ENCODE measurements at regions of chr4 and their contacts with region 1.

Region 1: DNA sequence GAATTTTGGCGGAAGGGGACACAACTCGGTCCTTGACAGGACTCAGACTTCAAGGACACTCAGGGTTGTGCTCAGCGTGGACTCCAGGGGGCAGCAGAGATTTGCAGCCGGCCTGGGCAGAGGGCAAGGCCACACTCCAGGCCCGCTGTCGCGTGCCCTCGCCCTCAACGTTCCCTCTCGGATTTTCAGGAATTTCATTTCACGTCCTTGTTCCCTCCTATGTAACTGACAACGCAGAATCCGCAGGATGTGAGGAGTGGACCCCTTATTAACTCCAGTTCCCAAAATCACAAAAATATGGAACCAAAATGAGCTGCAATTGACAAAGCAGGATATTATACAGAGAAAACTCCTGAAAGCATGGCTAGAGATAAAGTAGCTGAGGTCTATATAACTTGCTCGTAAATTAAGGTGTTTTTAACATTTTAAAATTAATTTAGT is 21.0 kb upstream of the DCTD start:
- DNase-seq: peak; percentile 65
- ATAC-seq: peak; percentile 92
- H3K4me3 ChIP-seq: no peak overlapping the region
- H3K4me3 Mint-ChIP-seq: no peak overlapping the region
- H3K27ac ChIP-seq: no peak overlapping the region
- H3K27ac Mint-ChIP-seq: no peak overlapping the region
- H3K4me1 ChIP-seq: no peaks in the 10 kb centered on the region
- H3K4me1 Mint-ChIP-seq: peaks cover 3% of the 10 kb centered on the region
- H3K27me3 ChIP-seq: peaks cover 0 to 4% (median 0%) of the 10 kb centered on the region in 4 experiments
- H3K27me3 Mint-ChIP-seq: peaks cover 20% of the 10 kb centered on the region
- CTCF ChIP-seq: peak; percentile 93

Region 2: GRCh38 chr4:182806259-182807252 is 131.7 kb before region 1 on chr4:
- CTCF ChIA-PET with region 1: no interaction called
- POLR2A ChIA-PET with region 1: no interaction called
- intact Hi-C with region 1: no loop called
- DNase-seq: peak; percentile 50
- ATAC-seq: peak; percentile 47
- H3K4me3 ChIP-seq: peak overlapping the region in 4 of 5 experiments; percentile 25 to 41 (median 32)
- H3K4me3 Mint-ChIP-seq: peak overlapping the region; percentile 85
- H3K27ac ChIP-seq: no peak overlapping the region
- H3K27ac Mint-ChIP-seq: no peak overlapping the region
- H3K4me1 ChIP-seq: peaks cover 21 to 26% of the 10 kb centered on the region in 2 donors
- H3K4me1 Mint-ChIP-seq: peaks cover 13% of the 10 kb centered on the region
- H3K27me3 ChIP-seq: peaks cover 0 to 22% (median 2%) of the 10 kb centered on the region in 4 experiments
- H3K27me3 Mint-ChIP-seq: peaks cover 19% of the 10 kb centered on the region
- CTCF ChIP-seq: peak; percentile 63

Region 3: DNA sequence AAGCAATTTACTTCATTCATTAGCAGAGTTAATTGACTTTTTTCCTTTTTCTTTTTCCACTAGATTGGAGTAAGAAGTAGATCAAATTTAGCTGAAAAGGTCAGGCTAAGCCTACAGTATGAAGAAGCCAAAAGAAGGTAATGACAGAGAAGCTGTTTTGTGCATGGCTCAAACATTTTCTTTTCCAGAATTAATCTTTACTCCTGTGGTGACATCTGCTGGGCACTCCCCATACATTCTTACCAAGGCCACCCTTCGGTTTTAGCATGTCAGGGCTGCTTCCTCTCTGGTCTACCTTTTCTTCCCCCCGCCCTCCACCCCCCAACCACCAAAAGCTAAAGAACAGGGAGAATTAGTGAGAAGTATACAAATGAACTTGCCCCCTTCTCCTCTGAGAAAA is 311.6 kb after region 1 on chr4:
- CTCF ChIA-PET with region 1: interaction called, 11 read pairs
- POLR2A ChIA-PET with region 1: no interaction called
- intact Hi-C with region 1: no loop called
- DNase-seq: no peak
- ATAC-seq: no peak
- H3K4me3 ChIP-seq: no peak overlapping the region
- H3K4me3 Mint-ChIP-seq: no peak overlapping the region
- H3K27ac ChIP-seq: no peak overlapping the region
- H3K27ac Mint-ChIP-seq: no peak overlapping the region
- H3K4me1 ChIP-seq: no peaks in the 10 kb centered on the region
- H3K4me1 Mint-ChIP-seq: no peaks in the 10 kb centered on the region
- H3K27me3 ChIP-seq: no peaks in the 10 kb centered on the region
- H3K27me3 Mint-ChIP-seq: no peaks in the 10 kb centered on the region
- CTCF ChIP-seq: no peak

Region 4: DNA sequence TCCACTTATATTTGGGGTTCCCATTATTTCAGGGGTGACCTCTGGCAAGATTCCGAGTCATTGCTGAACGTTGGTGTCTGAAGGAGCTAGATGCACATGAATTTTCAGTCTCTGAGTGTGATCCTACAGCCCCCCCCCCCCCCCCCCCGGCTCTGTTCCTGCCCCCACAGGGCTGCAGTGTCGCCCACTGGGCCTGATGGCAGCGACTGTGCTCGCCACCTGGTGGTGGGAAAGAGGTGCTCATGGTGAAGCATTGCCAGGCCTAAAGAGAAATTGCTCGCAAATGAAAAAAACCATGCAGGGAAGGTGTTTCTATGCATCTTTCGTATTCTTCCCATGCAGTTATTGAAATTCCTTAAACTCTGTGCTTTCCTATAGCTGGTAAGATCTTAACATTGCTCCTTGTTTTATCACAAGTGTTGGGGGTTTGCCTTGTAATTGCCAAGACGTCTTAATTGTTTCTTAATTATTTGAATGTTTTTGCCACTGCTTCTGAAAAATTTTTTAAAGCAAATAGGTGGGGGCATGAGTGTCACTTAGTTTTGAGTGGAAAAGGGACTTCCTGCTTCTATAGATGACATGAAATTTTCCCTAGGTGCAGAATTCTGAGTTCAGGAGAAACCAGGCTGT is 318.6 kb after region 1 on chr4:
- CTCF ChIA-PET with region 1: interaction called, 35 read pairs
- POLR2A ChIA-PET with region 1: no interaction called
- intact Hi-C with region 1: loop called (anchors 1 kb)
- DNase-seq: peak; percentile 27
- ATAC-seq: peak; percentile 36
- H3K4me3 ChIP-seq: no peak overlapping the region
- H3K4me3 Mint-ChIP-seq: no peak overlapping the region
- H3K27ac ChIP-seq: no peak overlapping the region
- H3K27ac Mint-ChIP-seq: no peak overlapping the region
- H3K4me1 ChIP-seq: no peaks in the 10 kb centered on the region
- H3K4me1 Mint-ChIP-seq: no peaks in the 10 kb centered on the region
- H3K27me3 ChIP-seq: no peaks in the 10 kb centered on the region
- H3K27me3 Mint-ChIP-seq: peaks cover 7% of the 10 kb centered on the region
- CTCF ChIP-seq: peak; percentile 55

Region 5: GRCh38 chr4:183407128-183407585 is 468.9 kb after region 1 on chr4:
- CTCF ChIA-PET with region 1: interaction called, 5 read pairs
- POLR2A ChIA-PET with region 1: no interaction called
- intact Hi-C with region 1: loop called (anchors 5 kb)
- DNase-seq: peak; percentile 89
- ATAC-seq: peak; percentile 99
- H3K4me3 ChIP-seq: peak overlapping the region in 4 of 5 experiments; percentile 58 to 74 (median 62)
- H3K4me3 Mint-ChIP-seq: peak overlapping the region; percentile 80
- H3K27ac ChIP-seq: peak overlapping the region; percentile 53 to 68
- H3K27ac Mint-ChIP-seq: peak overlapping the region; percentile 70
- H3K4me1 ChIP-seq: peaks cover 5 to 10% of the 10 kb centered on the region in 2 donors
- H3K4me1 Mint-ChIP-seq: peaks cover 17% of the 10 kb centered on the region
- H3K27me3 ChIP-seq: no peaks in the 10 kb centered on the region
- H3K27me3 Mint-ChIP-seq: no peaks in the 10 kb centered on the region
- CTCF ChIP-seq: peak; percentile 87